Sigmoid colon (tissue), 7 donors: ENCODE measurements at regions of chr1 and their contacts with region 1.

Region 1: DNA sequence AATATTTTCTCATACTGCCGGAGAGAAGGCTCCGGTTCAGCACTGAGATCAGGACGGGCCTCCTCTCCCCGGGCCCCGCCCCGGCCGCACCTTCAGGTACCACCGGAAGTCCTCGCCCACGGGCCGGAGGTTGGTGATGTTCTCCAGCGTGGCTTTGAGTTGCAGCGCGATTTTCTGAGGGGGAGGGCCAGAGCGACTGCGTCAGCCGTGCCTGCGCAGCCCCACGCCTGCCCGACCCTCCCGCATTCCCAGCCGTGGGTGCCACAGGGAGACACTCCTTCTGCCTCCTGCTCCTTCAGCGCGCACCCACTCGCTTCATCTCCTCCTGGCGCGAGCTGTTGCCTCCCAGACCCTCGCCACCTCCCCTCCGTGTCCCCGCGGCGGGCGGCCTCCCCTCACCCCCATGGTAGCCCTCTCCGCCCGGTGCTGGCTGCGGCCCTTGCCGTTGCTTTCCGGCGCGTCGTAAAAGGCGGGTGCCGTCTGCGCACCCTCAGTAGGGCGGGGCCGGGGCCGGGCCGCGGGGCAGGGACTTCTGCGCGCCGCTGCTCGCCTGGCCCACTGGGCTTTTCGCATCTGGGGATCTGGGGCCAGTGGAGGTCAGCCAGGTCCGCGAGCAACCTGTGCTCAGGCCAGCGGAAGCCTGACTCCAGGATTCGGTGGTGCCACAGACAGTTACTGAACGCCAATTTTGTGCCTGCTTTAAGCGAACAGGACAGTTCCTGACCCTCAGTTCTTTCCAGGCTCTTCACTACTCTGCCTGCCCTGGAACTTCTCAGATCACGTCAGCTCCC is at the start of gene CZIB:
- DNase-seq: peak; percentile 96
- H3K4me3 ChIP-seq: peak within 1 kb of the TSS; percentile 56 to 89 (median 82)
- H3K27ac ChIP-seq: peak within 1 kb of the TSS; percentile 93 to 99 (median 96)
- H3K4me1 ChIP-seq: peaks cover 0 to 17% (median 16%) of the 10 kb centered on the region in 4 donors
- H3K27me3 ChIP-seq: no peaks in the 10 kb centered on the region
- CTCF ChIP-seq: no peak
- EP300 ChIP-seq: peak in 1 of 4 donors; percentile 39
- POLR2A ChIP-seq: peak; percentile 85 to 91
- total RNA-seq, gene CZIB: 79.2 to 95.6 (median 92.7) TPM

Region 2: DNA sequence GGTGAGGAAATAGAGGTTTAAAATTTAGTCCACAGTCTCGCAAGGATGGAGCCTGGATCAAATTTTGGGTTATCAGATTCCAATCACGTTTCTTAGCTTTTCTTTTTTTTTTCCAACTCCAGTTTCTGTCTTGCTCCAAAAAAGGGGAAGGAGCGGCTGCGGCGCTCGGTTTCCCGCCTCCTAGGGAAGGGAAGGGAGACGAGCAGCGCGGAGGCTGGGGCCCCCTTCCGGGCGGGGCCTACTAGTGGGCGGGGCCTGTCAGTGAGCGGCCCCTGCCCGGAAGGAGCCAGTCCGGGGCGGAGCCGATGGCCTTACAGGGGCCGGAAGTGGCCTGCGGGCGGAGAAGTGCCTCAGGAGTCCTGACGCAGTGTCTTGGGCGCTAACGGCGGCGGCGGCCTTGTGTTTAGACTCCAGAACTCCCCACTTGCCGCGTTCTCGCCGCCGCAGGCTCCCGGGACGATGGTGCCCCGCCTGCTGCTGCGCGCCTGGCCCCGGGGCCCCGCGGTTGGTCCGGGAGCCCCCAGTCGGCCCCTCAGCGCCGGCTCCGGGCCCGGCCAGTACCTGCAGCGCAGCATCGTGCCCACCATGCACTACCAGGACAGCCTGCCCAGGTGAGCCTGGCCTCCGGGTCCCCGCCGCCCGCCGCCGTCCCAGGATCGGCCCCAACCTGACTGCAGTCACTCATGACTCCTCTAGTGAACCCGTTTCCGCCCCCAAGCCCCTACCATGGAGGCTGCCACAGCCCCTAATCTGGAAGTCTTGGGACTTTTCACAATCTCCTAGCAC is 23.7 kb before region 1 on chr1 and contains the start of gene CPT2:
- intact Hi-C with region 1: loop called (anchors 1 kb)
- DNase-seq: peak; percentile 98
- H3K4me3 ChIP-seq: peak within 1 kb of the TSS; percentile 89 to 100 (median 93)
- H3K27ac ChIP-seq: peak within 1 kb of the TSS; percentile 99 to 100 (median 100)
- H3K4me1 ChIP-seq: peaks cover 0 to 38% (median 31%) of the 10 kb centered on the region in 4 donors
- H3K27me3 ChIP-seq: no peaks in the 10 kb centered on the region
- CTCF ChIP-seq: no peak
- EP300 ChIP-seq: no peak
- POLR2A ChIP-seq: peak; percentile 89 to 96
- total RNA-seq, gene CPT2: 8.0 to 14.1 (median 11.5) TPM